ENCODE measurements at regions of chr11 and their contacts with region 1.

Region 1: GRCh38 chr11:95790123-95790932 is at the start of gene CEP57:
- DNase-seq: peak; percentile 84
- ATAC-seq: peak; percentile 64
- H3K4me3 Mint-ChIP-seq: peak within 1 kb of the TSS; percentile 100
- H3K27ac Mint-ChIP-seq: peak within 1 kb of the TSS; percentile 100
- H3K4me1 Mint-ChIP-seq: peaks cover 47% of the 10 kb centered on the region
- H3K27me3 Mint-ChIP-seq: no peaks in the 10 kb centered on the region
- CTCF ChIP-seq: no peak
- total RNA-seq, gene CEP57: 52.6 and 53.7 TPM in 2 replicates

Region 2: DNA sequence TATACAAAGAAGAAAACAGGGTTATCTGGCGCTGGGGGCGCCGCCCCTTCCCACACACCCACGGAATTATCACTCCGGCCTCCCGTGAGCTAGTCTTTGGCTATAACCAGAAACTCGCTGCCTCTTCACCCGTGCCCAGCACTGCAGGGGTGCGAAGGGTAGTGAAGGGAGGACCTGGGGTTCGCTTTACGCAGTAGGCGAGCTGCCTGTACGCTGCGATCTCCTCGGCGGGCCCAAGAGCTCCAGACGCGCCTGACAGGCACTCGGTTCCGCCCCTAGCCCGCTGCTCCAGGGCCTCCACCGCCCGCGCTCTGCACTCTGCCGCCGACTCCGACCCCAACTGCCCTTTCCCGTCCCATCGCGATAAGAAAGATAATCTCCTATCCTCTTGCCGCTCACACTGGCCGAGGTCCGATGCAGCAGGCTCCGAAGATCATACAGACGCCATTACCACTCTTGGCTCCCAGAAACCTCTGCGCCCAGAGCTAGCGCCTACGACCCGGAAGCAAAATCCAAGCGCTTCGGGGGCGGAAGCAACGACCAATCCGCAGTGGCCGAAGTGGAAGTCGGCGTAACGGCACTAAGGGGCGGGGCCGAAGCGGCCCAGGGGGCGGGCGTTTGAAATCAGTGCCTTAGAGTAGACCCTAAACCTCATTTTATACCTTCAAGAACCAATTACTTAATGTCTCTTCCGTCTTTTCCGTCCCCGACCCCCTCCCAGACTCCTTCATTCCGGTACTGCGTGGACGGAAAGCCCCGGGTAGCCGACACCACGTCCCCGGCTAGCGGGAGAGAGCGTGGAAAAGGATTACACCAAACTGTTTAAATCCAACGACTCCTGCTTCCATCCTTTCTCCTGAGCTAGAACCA is 817.0 kb before region 1 on chr11 and contains the starts of genes CWC15 and KDM4D:
- CTCF ChIA-PET with region 1: no interaction called
- POLR2A ChIA-PET with region 1: interaction called, 11 read pairs
- intact Hi-C with region 1: loop called (anchors 1 kb)
- DNase-seq: peak; percentile 87
- ATAC-seq: peak; percentile 100
- H3K4me3 Mint-ChIP-seq: peak within 1 kb of the TSS; percentile 99
- H3K27ac Mint-ChIP-seq: peak within 1 kb of the TSS; percentile 95
- H3K4me1 Mint-ChIP-seq: peaks cover 20% of the 10 kb centered on the region
- H3K27me3 Mint-ChIP-seq: no peaks in the 10 kb centered on the region
- CTCF ChIP-seq: no peak
- total RNA-seq, gene CWC15: 69.1 and 69.2 TPM in 2 replicates
- total RNA-seq, gene KDM4D: 0.67 and 0.93 TPM in 2 replicates

Region 3: DNA sequence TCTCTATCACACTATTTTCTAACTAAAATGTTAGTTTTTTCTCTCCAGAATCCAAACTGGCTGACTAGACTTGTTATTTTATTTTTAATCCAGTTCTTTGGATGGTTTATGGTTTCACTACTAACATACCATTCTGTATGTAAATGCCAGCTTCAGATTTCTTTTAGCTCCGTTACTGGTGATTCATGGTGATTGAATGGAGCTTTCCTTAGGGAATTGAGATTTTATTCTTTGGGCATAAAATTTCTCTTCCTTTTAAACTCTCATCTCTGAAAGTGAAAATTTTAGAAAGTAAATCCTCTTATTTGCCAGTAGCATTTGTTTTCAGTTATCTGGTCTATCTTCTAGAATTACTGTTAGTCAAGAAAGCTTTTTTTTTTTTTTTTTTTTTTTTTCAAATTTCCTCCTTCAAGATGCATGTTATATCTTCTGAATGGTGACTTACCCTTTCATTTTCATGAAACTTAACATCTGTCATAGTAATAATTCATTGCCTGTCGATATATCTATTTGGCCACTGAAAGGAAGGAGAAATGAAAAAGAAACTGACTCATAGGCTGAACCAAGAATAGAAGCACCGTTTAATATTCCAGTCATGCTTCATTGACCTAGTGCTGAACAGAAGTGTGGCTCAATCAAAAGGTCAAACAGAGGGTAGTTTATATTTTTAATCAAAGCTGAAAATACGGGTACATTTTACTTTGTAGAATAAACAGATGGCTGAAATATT is 694.3 kb before region 1 on chr11:
- CTCF ChIA-PET with region 1: no interaction called
- POLR2A ChIA-PET with region 1: interaction called, 6 read pairs
- intact Hi-C with region 1: loop called (anchors 2 kb)
- DNase-seq: no peak
- ATAC-seq: peak; percentile 89
- H3K4me3 Mint-ChIP-seq: peak overlapping the region; percentile 59
- H3K27ac Mint-ChIP-seq: peak overlapping the region; percentile 78
- H3K4me1 Mint-ChIP-seq: peaks cover 94% of the 10 kb centered on the region
- H3K27me3 Mint-ChIP-seq: no peaks in the 10 kb centered on the region
- CTCF ChIP-seq: no peak

Region 4: GRCh38 chr11:95705485-95706124 is 84.7 kb before region 1 on chr11:
- CTCF ChIA-PET with region 1: no interaction called
- POLR2A ChIA-PET with region 1: interaction called, 15 read pairs
- intact Hi-C with region 1: no loop called
- DNase-seq: peak; percentile 61
- ATAC-seq: peak; percentile 93
- H3K4me3 Mint-ChIP-seq: no peak overlapping the region
- H3K27ac Mint-ChIP-seq: no peak overlapping the region
- H3K4me1 Mint-ChIP-seq: peaks cover 26% of the 10 kb centered on the region
- H3K27me3 Mint-ChIP-seq: no peaks in the 10 kb centered on the region
- CTCF ChIP-seq: peak; percentile 93

Region 5: GRCh38 chr11:95778699-95779098 is 11.6 kb before region 1 on chr11:
- CTCF ChIA-PET with region 1: no interaction called
- POLR2A ChIA-PET with region 1: interaction called, 41 read pairs
- intact Hi-C with region 1: loop called (anchors 1 kb)
- DNase-seq: no peak
- ATAC-seq: peak; percentile 64
- H3K4me3 Mint-ChIP-seq: no peak overlapping the region
- H3K27ac Mint-ChIP-seq: peak overlapping the region; percentile 19
- H3K4me1 Mint-ChIP-seq: peaks cover 35% of the 10 kb centered on the region
- H3K27me3 Mint-ChIP-seq: no peaks in the 10 kb centered on the region
- CTCF ChIP-seq: no peak

Region 6: GRCh38 chr11:95968585-95968984 is 178.3 kb after region 1 on chr11:
- CTCF ChIA-PET with region 1: no interaction called
- POLR2A ChIA-PET with region 1: no interaction called
- intact Hi-C with region 1: no loop called
- DNase-seq: no peak
- ATAC-seq: no peak
- H3K4me3 Mint-ChIP-seq: no peak overlapping the region
- H3K27ac Mint-ChIP-seq: no peak overlapping the region
- H3K4me1 Mint-ChIP-seq: no peaks in the 10 kb centered on the region
- H3K27me3 Mint-ChIP-seq: no peaks in the 10 kb centered on the region
- CTCF ChIP-seq: no peak

Region 7: GRCh38 chr11:96215110-96215782 is 424.9 kb after region 1 on chr11:
- CTCF ChIA-PET with region 1: no interaction called
- POLR2A ChIA-PET with region 1: no interaction called
- intact Hi-C with region 1: loop called (anchors 5 kb)
- DNase-seq: peak; percentile 30
- ATAC-seq: peak; percentile 82
- H3K4me3 Mint-ChIP-seq: peak overlapping the region; percentile 78
- H3K27ac Mint-ChIP-seq: peak overlapping the region; percentile 99
- H3K4me1 Mint-ChIP-seq: peaks cover 83% of the 10 kb centered on the region
- H3K27me3 Mint-ChIP-seq: no peaks in the 10 kb centered on the region
- CTCF ChIP-seq: no peak

Region 8: GRCh38 chr11:96389720-96390487 is 599.6 kb after region 1 on chr11 and contains the starts of genes CCDC82 and JRKL:
- CTCF ChIA-PET with region 1: no interaction called
- POLR2A ChIA-PET with region 1: interaction called, 29 read pairs
- intact Hi-C with region 1: loop called (anchors 1 kb)
- DNase-seq: peak; percentile 99
- ATAC-seq: peak; percentile 98
- H3K4me3 Mint-ChIP-seq: peak within 1 kb of the TSS; percentile 94
- H3K27ac Mint-ChIP-seq: peak within 1 kb of the TSS; percentile 90
- H3K4me1 Mint-ChIP-seq: peaks cover 33% of the 10 kb centered on the region
- H3K27me3 Mint-ChIP-seq: no peaks in the 10 kb centered on the region
- CTCF ChIP-seq: no peak
- total RNA-seq, gene CCDC82: 22.6 and 33.8 TPM in 2 replicates
- total RNA-seq, gene JRKL: 9.6 and 9.8 TPM in 2 replicates

Measured in activated B cell treated with CpG ODN at 0.5 μM for 24 hours (primary cell).